IMR-90 (cell line): ENCODE measurements at regions of chr3 and their contacts with region 1.

Region 1: GRCh38 chr3:69855436-69856162 is 116.3 kb downstream of the MITF start:
- DNase-seq: peak; percentile 64
- ATAC-seq: peak; percentile 88
- H3K4me3 ChIP-seq: no peak overlapping the region
- H3K27ac ChIP-seq: peak overlapping the region; percentile 34; the same call in 1 of the 2 replicates
- H3K4me1 ChIP-seq: peaks cover 6% of the 10 kb centered on the region
- H3K27me3 ChIP-seq: no peaks in the 10 kb centered on the region
- CTCF ChIP-seq: peak; percentile 69
- POLR2A ChIP-seq: no peak
- RAD21 ChIP-seq: peak; percentile 68

Region 2: GRCh38 chr3:69691860-69692259 is 163.7 kb before region 1 on chr3:
- CTCF ChIA-PET with region 1: interaction called, 19 read pairs
- POLR2A ChIA-PET with region 1: no interaction called
- dilution Hi-C with region 1: no loop called
- in situ Hi-C with region 1: loop called (anchors 5 kb)
- intact Hi-C with region 1: loop called (anchors 1 kb)
- DNase-seq: no peak
- ATAC-seq: no peak
- H3K4me3 ChIP-seq: no peak overlapping the region
- H3K27ac ChIP-seq: no peak overlapping the region
- H3K4me1 ChIP-seq: peaks cover 4% of the 10 kb centered on the region
- H3K27me3 ChIP-seq: peaks cover 3% of the 10 kb centered on the region
- CTCF ChIP-seq: no peak
- POLR2A ChIP-seq: no peak
- RAD21 ChIP-seq: no peak

Region 3: GRCh38 chr3:69739204-69740102 is 116.1 kb before region 1 on chr3 and contains the start of gene MITF:
- CTCF ChIA-PET with region 1: interaction called, 5 read pairs
- POLR2A ChIA-PET with region 1: no interaction called
- dilution Hi-C with region 1: no loop called
- in situ Hi-C with region 1: no loop called
- intact Hi-C with region 1: loop called (anchors 5 kb)
- DNase-seq: peak; percentile 88
- ATAC-seq: peak; percentile 98
- H3K4me3 ChIP-seq: peak within 1 kb of the TSS; percentile 86
- H3K27ac ChIP-seq: peak within 1 kb of the TSS; percentile 57
- H3K4me1 ChIP-seq: peaks cover 3% of the 10 kb centered on the region; the same call in 1 of the 2 replicates
- H3K27me3 ChIP-seq: peaks cover under 1% of the 10 kb centered on the region; the same call in 1 of the 2 replicates
- CTCF ChIP-seq: no peak
- POLR2A ChIP-seq: no peak
- RAD21 ChIP-seq: no peak
- total RNA-seq, gene MITF: 13.3 and 16.7 TPM in 2 replicates

Region 4: DNA sequence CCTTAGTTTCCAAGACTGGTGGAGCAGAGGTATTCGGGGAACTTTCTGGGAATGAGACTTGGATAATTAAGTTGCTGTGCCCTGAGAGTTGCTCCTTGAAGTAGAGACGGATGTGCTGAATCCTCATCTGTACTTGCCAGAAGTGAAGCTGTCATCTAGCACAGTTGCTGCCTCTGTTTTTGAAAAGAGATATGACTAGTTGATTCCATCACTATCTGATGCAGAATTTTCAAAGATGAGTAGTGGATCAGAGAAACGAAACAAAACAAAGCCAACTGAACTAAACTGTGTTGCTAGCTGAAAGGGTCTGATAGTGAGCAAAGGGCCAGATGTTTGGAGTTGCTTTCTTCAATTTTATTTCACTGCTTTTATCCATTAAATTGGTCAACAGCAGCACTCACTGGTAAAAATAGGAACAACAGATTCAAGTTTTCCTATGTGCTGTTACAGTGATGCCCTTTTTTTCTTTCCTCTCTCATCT is 63.6 kb before region 1 on chr3:
- CTCF ChIA-PET with region 1: interaction called, 8 read pairs
- POLR2A ChIA-PET with region 1: no interaction called
- dilution Hi-C with region 1: no loop called
- in situ Hi-C with region 1: no loop called
- intact Hi-C with region 1: loop called (anchors 2 kb)
- DNase-seq: peak; percentile 72
- ATAC-seq: peak; percentile 70
- H3K4me3 ChIP-seq: no peak overlapping the region
- H3K27ac ChIP-seq: peak overlapping the region; percentile 83; the same call in 1 of the 2 replicates
- H3K4me1 ChIP-seq: peaks cover 15% of the 10 kb centered on the region
- H3K27me3 ChIP-seq: no peaks in the 10 kb centered on the region
- CTCF ChIP-seq: peak; percentile 71
- POLR2A ChIP-seq: no peak
- RAD21 ChIP-seq: peak; percentile 83

Region 5: GRCh38 chr3:69806735-69807438 is 48.7 kb before region 1 on chr3:
- CTCF ChIA-PET with region 1: no interaction called
- POLR2A ChIA-PET with region 1: no interaction called
- dilution Hi-C with region 1: no loop called
- in situ Hi-C with region 1: no loop called
- intact Hi-C with region 1: loop called (anchors 5 kb)
- DNase-seq: peak; percentile 85
- ATAC-seq: peak; percentile 80
- H3K4me3 ChIP-seq: no peak overlapping the region
- H3K27ac ChIP-seq: peak overlapping the region; percentile 77
- H3K4me1 ChIP-seq: peaks cover 18% of the 10 kb centered on the region
- H3K27me3 ChIP-seq: no peaks in the 10 kb centered on the region
- CTCF ChIP-seq: no peak
- POLR2A ChIP-seq: no peak
- RAD21 ChIP-seq: no peak

Region 6: DNA sequence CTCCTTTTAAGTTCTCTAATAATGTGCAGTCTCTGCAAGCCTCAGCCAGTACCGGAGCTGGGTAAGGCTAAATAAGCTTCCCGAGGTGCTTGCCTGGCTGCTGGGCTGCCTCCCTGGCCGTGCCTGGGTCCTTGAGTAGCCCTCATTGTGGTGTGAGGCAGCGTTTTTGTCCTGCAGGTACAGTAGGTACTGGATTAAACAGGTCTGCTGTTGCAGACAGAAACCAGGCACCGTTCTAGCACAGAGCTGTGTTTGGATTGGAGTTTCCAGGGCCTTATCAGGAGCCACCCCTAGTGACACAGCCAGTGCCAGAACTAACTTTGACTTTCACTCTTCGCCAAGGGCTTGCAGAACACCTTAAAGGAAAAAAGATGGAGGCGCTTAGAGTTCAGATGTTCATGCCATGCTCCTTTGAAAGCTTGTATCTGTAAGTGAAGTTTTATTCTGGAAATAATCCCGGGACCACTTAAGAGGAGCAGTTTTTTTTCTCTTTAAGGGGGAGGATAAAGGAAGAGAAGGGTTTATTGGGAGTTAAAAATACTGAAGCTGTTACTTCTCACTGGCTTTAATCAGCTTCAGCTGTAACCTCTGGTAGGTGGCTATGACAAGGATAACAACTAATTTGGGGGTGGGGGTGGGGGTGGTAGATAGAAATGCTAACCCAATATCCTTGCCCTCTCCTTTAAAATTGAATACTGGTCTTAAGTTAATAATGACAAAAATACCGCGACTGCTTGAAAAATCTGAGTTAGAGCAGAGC is 10.5 kb after region 1 on chr3:
- CTCF ChIA-PET with region 1: interaction called, 17 read pairs
- POLR2A ChIA-PET with region 1: interaction called, 3 read pairs
- dilution Hi-C with region 1: no loop called
- in situ Hi-C with region 1: no loop called
- intact Hi-C with region 1: no loop called
- DNase-seq: peak; percentile 23
- ATAC-seq: peak; percentile 5
- H3K4me3 ChIP-seq: peak overlapping the region; percentile 20; the same call in 1 of the 2 replicates
- H3K27ac ChIP-seq: peak overlapping the region; percentile 97
- H3K4me1 ChIP-seq: peaks cover 36% of the 10 kb centered on the region
- H3K27me3 ChIP-seq: no peaks in the 10 kb centered on the region
- CTCF ChIP-seq: no peak
- POLR2A ChIP-seq: no peak
- RAD21 ChIP-seq: no peak

Region 7: DNA sequence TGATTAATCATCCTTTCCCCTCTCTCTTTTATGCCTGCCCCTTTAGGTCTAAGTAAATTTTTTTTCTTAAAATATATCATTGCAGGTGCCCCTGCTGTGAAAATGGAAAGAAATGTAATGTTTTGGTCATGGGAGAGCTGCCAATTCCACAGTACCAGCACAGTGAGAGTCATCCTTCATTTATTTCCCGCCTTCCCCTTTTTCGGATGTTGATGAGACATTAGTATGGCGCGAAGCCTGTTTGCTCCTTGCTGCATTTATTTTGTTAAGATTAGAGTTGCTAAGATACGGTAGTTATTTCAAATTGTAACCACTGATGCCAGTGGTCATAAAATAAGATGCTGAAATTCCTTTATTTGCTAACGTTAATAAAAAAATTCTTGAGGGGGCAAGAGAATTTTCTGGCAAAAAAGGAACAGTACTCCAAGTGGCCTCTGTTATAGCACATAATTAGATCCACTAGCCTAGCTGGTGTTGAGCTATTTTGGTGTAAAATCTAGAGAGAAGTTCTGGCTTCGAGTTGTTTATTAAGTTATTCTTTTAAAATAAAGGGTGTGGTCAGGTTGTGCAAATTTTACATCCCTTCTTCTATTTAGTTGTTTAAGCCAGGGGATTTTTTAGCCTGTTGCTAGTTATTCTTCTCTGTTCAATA is 394.0 kb after region 1 on chr3:
- CTCF ChIA-PET with region 1: no interaction called
- POLR2A ChIA-PET with region 1: no interaction called
- dilution Hi-C with region 1: no loop called
- in situ Hi-C with region 1: no loop called
- intact Hi-C with region 1: no loop called
- DNase-seq: no peak
- ATAC-seq: no peak
- H3K4me3 ChIP-seq: no peak overlapping the region
- H3K27ac ChIP-seq: no peak overlapping the region
- H3K4me1 ChIP-seq: no peaks in the 10 kb centered on the region
- H3K27me3 ChIP-seq: no peaks in the 10 kb centered on the region
- CTCF ChIP-seq: no peak
- POLR2A ChIP-seq: no peak
- RAD21 ChIP-seq: no peak